CD8-positive, alpha-beta memory T cell (primary cell): ENCODE measurements at regions of chr3 and their contacts with region 1.

Region 1: DNA sequence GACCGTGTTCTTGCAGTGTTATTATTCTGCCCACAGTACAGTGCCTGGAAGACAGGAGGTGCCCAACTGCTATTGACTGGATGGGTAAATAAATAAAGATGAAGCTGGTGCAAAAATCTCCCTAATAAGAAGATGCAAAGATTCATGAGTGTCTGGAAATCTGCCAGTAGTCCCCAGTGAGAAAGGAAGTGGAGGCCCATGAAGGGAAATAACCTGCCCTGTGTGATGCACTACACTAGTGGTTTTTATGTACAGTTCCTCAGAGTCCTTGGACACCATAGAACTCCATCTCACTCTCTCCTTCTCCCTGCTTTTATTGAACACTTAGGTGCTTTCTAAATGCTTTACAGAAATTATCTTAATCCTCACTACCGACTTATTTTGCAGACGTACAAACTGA is 8.3 kb upstream of the SUCLG2 start:
- DNase-seq: peak in 2 of 5 donors; percentile 42 to 47
- H3K4me3 ChIP-seq: no peak overlapping the region
- H3K4me3 Mint-ChIP-seq: peak overlapping the region in 5 of 7 donors; percentile 1 to 50 (median 11)
- H3K27ac ChIP-seq: no peak overlapping the region
- H3K27ac Mint-ChIP-seq: peak overlapping the region in 5 of 8 donors; percentile 23 to 31 (median 30)
- H3K4me1 ChIP-seq: peaks cover 29% of the 10 kb centered on the region
- H3K4me1 Mint-ChIP-seq: peaks cover 32 to 63% (median 52%) of the 10 kb centered on the region in 3 donors
- H3K27me3 ChIP-seq: no peaks in the 10 kb centered on the region
- H3K27me3 Mint-ChIP-seq: no peaks in the 10 kb centered on the region

Region 2: DNA sequence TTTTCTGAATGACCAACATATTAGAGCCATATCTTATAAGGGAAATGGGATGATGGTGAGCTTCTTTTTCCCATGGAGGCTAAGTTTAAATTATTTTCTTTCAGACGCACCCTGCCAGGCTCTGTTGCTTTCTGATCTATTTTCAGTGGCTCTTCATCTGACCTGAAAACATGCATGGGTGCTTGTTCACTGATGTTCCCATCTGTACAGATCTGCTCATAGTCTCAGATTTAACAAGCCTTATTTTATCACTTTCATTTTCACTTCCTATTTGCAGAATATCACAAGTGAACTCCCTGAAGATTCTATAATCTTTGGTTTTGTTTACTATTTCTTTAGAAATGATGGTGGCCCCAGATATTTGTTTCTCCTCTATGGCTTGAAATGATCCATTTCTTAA is 22.8 kb after region 1 on chr3:
- CTCF ChIA-PET with region 1: interaction called, 3 read pairs
- POLR2A ChIA-PET with region 1: interaction called, 11 read pairs
- DNase-seq: no peak
- H3K4me3 ChIP-seq: peak overlapping the region; percentile 37
- H3K4me3 Mint-ChIP-seq: peak overlapping the region; percentile 5 to 64 (median 39)
- H3K27ac ChIP-seq: no peak overlapping the region
- H3K27ac Mint-ChIP-seq: peak overlapping the region in 7 of 8 donors; percentile 0 to 39 (median 20)
- H3K4me1 ChIP-seq: peaks cover 33% of the 10 kb centered on the region
- H3K4me1 Mint-ChIP-seq: peaks cover 24 to 33% (median 29%) of the 10 kb centered on the region in 3 donors
- H3K27me3 ChIP-seq: no peaks in the 10 kb centered on the region
- H3K27me3 Mint-ChIP-seq: no peaks in the 10 kb centered on the region